Esophagus squamous epithelium (tissue), 5 donors: ENCODE measurements at regions of chr4 and their contacts with region 1.

Region 1: DNA sequence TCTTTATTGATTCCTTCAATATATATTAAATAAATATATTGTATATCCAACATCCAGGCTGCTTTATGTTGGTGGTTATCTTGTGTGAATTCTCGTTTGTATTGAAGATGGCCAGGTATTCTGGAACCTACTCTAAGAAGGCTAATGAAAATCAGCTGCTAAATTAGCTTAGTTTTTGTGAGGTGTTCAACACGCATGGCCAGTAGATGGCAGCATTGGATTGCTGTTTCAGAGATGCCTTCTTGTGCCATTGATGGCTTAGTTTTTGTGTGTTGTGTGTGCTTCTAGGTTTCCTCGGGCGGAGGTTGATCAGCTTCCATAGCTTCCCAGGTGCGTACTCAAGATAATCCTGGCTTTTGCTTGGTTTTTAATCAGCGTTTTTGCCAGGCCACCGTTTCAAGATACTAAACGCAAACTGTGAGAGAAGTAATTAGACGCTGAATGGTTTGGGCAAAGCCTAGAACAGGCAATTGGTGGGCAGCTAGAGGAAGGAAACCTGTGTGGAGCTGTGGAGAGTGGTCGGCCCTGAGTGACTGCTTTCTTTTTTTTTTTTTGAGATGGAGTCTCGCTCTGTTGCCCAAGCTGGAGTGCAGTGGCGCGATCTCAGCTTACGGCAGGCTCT is 15.1 kb downstream of the NOCT start:
- DNase-seq: no peak
- H3K4me3 ChIP-seq: no peak overlapping the region
- H3K27ac ChIP-seq: no peak overlapping the region
- H3K4me1 ChIP-seq: peaks cover 0 to 25% (median 3%) of the 10 kb centered on the region in 3 donors
- H3K27me3 ChIP-seq: no peaks in the 10 kb centered on the region
- CTCF ChIP-seq: peak; percentile 60 to 86 (median 80)
- POLR2A ChIP-seq: no peak

Region 2: DNA sequence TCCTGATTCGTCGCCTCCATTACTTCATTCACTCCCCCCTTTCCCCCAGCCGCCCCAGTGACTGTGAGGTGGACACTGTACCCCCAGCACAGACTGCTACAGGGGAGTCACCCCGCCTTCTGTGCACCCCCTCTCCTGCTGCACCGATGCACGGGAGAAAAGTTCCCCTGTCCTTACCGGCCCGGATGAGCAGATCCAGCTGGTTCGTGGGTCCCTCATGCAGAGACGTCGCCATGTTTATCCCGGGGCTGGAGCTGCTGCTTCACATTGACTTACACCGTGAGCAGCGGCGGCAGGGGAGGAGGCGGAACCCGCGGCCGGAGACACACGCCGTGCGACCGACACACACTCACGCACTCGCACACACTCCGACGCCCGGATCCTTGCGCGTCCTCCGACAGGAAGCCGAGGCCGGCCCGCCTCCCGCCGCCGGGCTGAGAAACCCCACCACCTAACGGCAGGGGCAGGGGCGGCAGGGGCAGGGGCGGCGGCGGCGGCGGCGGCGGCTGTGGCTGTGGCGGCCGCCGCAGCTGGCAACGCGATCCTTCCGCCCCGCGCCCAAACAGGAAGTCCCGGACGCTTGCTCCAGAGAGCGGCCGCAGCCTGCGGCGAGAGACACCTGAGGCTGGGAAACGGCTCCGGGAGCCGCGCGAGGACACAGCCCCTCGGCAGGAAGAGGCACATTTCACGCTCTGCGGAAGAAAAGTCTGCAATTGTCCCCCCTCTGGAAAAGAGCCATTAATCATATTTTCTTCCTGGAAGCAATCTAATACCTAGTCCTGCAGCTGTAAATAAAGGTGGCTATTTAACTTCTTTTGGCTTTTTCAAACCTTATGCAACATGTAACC is 53.5 kb after region 1 on chr4:
- intact Hi-C with region 1: loop called (anchors 10 kb)
- DNase-seq: peak; percentile 64
- H3K4me3 ChIP-seq: peak overlapping the region; percentile 55 to 97 (median 76)
- H3K27ac ChIP-seq: peak overlapping the region; percentile 88 to 99 (median 96)
- H3K4me1 ChIP-seq: peaks cover 0 to 48% (median 20%) of the 10 kb centered on the region in 3 donors
- H3K27me3 ChIP-seq: no peaks in the 10 kb centered on the region
- CTCF ChIP-seq: peak in 5 of 6 experiments; percentile 3 to 22 (median 12)
- POLR2A ChIP-seq: peak in 3 of 4 donors; percentile 5 to 58 (median 55)

Region 3: DNA sequence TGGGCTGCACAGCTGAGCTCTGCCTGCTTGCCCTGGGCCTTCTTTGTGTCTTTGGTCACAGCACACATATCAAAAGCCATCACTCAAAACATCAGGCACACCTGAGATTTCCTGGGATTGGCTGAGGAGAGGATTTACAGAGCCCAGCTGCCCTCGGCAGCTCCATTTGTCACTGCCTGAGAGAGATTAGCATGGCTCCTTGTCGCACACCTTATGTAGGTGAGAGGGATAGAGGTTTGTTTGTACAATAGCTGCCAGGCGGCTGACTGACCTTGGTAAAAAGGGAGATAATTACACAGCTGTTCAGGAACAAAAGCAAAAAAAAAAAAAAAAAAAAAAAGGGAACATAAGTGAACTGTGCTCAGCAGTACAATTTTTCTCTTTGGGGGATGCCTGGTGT is 698.1 kb after region 1 on chr4:
- intact Hi-C with region 1: no loop called
- DNase-seq: no peak
- H3K4me3 ChIP-seq: no peak overlapping the region
- H3K27ac ChIP-seq: no peak overlapping the region
- H3K4me1 ChIP-seq: peaks cover 0 to 9% (median under 1%) of the 10 kb centered on the region in 3 donors
- H3K27me3 ChIP-seq: no peaks in the 10 kb centered on the region
- CTCF ChIP-seq: no peak
- POLR2A ChIP-seq: no peak